CD4-positive, alpha-beta T cell (primary cell): ENCODE measurements at regions of chr10 and their contacts with region 1.

Region 1: DNA sequence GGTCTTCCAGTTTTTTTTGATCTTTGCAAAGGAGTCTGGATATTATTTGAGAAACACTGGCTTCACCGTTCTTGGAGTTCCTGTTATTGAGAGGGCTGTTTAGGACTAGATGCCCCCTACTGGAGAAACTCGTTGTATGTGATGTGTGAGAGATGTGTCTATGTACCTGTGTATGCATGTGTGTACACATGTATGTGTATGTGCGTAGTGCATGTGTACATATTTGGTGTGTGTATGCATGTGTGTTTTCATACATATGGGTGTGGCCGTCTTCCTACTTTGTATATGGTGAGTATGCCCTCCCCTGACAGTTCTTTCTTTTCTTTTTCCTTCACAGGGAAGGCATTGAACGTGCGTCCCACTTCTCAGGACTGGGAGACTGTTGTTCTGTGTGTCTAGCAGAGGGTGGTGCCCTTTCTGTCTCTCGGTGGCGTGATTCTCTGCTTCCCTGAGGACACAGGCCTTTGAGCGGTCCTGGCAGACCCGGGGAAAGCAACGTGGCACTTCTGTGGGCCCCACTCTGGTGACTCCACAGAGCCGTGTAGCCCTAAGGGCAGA is 3.0 kb upstream of the CALHM3 start:
- DNase-seq: peak in 5 of 14 experiments; percentile 15 to 84 (median 81)
- ATAC-seq: peak; percentile 78
- H3K4me3 ChIP-seq: no peak overlapping the region
- H3K4me3 Mint-ChIP-seq: no peak overlapping the region
- H3K27ac ChIP-seq: no peak overlapping the region
- H3K27ac Mint-ChIP-seq: no peak overlapping the region
- H3K4me1 ChIP-seq: peaks cover 7% of the 10 kb centered on the region
- H3K4me1 Mint-ChIP-seq: peaks cover 5% of the 10 kb centered on the region
- H3K27me3 ChIP-seq: no peaks in the 10 kb centered on the region
- H3K27me3 Mint-ChIP-seq: no peaks in the 10 kb centered on the region
- CTCF ChIP-seq: peak; percentile 90

Region 2: GRCh38 chr10:103416436-103417147 is 65.5 kb before region 1 on chr10:
- CTCF ChIA-PET with region 1: interaction called, 6 read pairs
- POLR2A ChIA-PET with region 1: no interaction called
- intact Hi-C with region 1: loop called (anchors 1 kb)
- DNase-seq: peak; percentile 35 to 81 (median 56)
- ATAC-seq: peak; percentile 54
- H3K4me3 ChIP-seq: no peak overlapping the region
- H3K4me3 Mint-ChIP-seq: no peak overlapping the region
- H3K27ac ChIP-seq: no peak overlapping the region
- H3K27ac Mint-ChIP-seq: no peak overlapping the region
- H3K4me1 ChIP-seq: no peaks in the 10 kb centered on the region
- H3K4me1 Mint-ChIP-seq: no peaks in the 10 kb centered on the region
- H3K27me3 ChIP-seq: no peaks in the 10 kb centered on the region
- H3K27me3 Mint-ChIP-seq: no peaks in the 10 kb centered on the region
- CTCF ChIP-seq: peak; percentile 90

Region 3: GRCh38 chr10:103451831-103452505 is 30.1 kb before region 1 on chr10 and contains the start of gene CALHM2:
- CTCF ChIA-PET with region 1: interaction called, 6 read pairs
- POLR2A ChIA-PET with region 1: interaction called, 3 read pairs
- intact Hi-C with region 1: loop called in 1 of 2 experiments (anchors 2 kb)
- DNase-seq: peak; percentile 22 to 73 (median 52)
- ATAC-seq: peak; percentile 69
- H3K4me3 ChIP-seq: peak within 1 kb of the TSS; percentile 72
- H3K4me3 Mint-ChIP-seq: peak within 1 kb of the TSS; percentile 93
- H3K27ac ChIP-seq: peak within 1 kb of the TSS; percentile 43 to 49
- H3K27ac Mint-ChIP-seq: peak within 1 kb of the TSS; percentile 76
- H3K4me1 ChIP-seq: peaks cover 64% of the 10 kb centered on the region
- H3K4me1 Mint-ChIP-seq: peaks cover 36% of the 10 kb centered on the region
- H3K27me3 ChIP-seq: no peaks in the 10 kb centered on the region
- H3K27me3 Mint-ChIP-seq: no peaks in the 10 kb centered on the region
- CTCF ChIP-seq: no peak
- total RNA-seq, gene CALHM2: 3.1 to 4.0 TPM

Region 4: DNA sequence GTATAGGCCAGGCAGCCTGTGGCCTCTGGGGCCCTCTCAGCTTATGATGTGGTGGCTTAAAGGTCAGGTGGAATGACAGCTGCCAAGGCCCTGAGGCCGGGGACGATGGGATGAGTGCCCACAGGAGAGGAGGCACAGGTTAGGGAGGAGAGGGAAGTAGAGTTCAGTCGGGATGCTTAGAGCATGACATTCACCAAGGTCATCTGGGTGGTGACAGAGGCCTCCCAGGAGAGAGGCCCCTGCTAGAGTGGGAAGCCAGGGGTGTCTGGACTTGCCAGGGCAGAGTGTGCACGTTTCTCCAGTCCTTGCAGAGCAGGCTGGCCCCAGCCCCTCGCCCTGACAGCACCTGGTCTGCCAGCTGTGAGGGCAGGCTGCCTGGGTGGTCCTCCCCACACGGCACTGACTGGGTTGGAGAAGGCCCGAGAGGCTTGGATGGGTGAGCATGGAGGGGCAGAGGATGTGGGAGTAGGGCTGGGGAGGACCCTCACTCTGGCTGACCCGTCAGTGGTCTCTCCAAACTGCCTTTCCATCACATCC is 24.8 kb before region 1 on chr10:
- CTCF ChIA-PET with region 1: no interaction called
- POLR2A ChIA-PET with region 1: interaction called, 3 read pairs
- intact Hi-C with region 1: loop called in 1 of 2 experiments (anchors 2 kb)
- DNase-seq: no peak
- ATAC-seq: no peak
- H3K4me3 ChIP-seq: no peak overlapping the region
- H3K4me3 Mint-ChIP-seq: no peak overlapping the region
- H3K27ac ChIP-seq: no peak overlapping the region
- H3K27ac Mint-ChIP-seq: no peak overlapping the region
- H3K4me1 ChIP-seq: peaks cover 35% of the 10 kb centered on the region
- H3K4me1 Mint-ChIP-seq: peaks cover 7% of the 10 kb centered on the region
- H3K27me3 ChIP-seq: no peaks in the 10 kb centered on the region
- H3K27me3 Mint-ChIP-seq: no peaks in the 10 kb centered on the region
- CTCF ChIP-seq: no peak